ENCODE measurements at regions of chr1 and their contacts with region 1.

Region 1: GRCh38 chr1:39105061-39105840 is 79.1 kb downstream of the NDUFS5 start:
- DNase-seq: peak; percentile 74
- H3K4me3 Mint-ChIP-seq: no peak overlapping the region
- H3K27ac Mint-ChIP-seq: no peak overlapping the region
- H3K4me1 Mint-ChIP-seq: peaks cover 34% of the 10 kb centered on the region
- H3K27me3 Mint-ChIP-seq: no peaks in the 10 kb centered on the region
- CTCF ChIP-seq: no peak

Region 2: DNA sequence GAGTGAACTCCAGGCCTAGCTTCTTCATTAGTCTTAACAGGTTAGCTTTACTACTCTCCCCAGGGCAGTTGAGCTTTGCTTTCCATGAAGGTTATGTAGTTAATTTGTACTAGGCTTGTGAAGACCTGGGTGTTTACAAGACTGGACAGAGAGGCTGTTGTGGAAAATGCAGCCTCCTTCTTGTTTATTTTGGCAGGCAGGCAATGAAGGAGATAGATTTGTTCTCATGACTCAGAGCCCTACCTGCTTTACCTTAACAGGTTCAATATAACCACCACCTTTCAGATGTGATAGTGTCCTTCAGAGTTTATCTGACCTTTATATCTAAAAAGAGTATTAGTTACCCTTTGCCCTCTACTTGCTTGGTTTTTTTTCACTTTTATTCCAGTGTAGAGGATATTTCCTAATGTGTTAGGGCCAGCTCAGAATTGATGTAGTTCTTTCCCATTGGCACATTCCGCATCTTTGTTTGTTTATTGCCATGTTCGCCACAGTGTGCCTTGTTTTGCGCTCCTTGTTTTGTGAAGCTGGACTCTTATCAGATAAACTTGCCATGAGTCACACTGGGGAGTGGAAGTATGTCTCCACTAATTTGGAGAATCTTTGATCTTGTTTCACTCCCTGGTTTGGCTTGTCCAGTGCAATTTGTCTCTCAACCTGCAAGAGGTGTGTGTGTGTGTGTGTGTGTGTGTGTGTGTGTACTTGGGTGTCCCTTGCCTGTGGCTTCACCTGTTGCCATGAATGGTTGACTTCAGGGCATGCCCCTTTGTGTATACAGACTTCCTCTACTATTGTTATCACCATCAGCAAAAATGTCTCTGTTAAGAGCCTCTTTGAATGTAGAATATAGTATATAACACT is 11.8 kb after region 1 on chr1:
- CTCF ChIA-PET with region 1: interaction called, 5 read pairs
- POLR2A ChIA-PET with region 1: interaction called, 427 read pairs
- intact Hi-C with region 1: no loop called
- DNase-seq: peak; percentile 65
- H3K4me3 Mint-ChIP-seq: no peak overlapping the region
- H3K27ac Mint-ChIP-seq: peak overlapping the region; percentile 5
- H3K4me1 Mint-ChIP-seq: peaks cover 8% of the 10 kb centered on the region
- H3K27me3 Mint-ChIP-seq: no peaks in the 10 kb centered on the region
- CTCF ChIP-seq: no peak

Region 3: GRCh38 chr1:39142401-39143151 is 37.3 kb after region 1 on chr1:
- CTCF ChIA-PET with region 1: interaction called, 7 read pairs
- POLR2A ChIA-PET with region 1: interaction called, 65 read pairs
- intact Hi-C with region 1: no loop called
- DNase-seq: peak; percentile 87
- H3K4me3 Mint-ChIP-seq: no peak overlapping the region
- H3K27ac Mint-ChIP-seq: peak overlapping the region; percentile 49
- H3K4me1 Mint-ChIP-seq: peaks cover 36% of the 10 kb centered on the region
- H3K27me3 Mint-ChIP-seq: no peaks in the 10 kb centered on the region
- CTCF ChIP-seq: no peak

Region 4: DNA sequence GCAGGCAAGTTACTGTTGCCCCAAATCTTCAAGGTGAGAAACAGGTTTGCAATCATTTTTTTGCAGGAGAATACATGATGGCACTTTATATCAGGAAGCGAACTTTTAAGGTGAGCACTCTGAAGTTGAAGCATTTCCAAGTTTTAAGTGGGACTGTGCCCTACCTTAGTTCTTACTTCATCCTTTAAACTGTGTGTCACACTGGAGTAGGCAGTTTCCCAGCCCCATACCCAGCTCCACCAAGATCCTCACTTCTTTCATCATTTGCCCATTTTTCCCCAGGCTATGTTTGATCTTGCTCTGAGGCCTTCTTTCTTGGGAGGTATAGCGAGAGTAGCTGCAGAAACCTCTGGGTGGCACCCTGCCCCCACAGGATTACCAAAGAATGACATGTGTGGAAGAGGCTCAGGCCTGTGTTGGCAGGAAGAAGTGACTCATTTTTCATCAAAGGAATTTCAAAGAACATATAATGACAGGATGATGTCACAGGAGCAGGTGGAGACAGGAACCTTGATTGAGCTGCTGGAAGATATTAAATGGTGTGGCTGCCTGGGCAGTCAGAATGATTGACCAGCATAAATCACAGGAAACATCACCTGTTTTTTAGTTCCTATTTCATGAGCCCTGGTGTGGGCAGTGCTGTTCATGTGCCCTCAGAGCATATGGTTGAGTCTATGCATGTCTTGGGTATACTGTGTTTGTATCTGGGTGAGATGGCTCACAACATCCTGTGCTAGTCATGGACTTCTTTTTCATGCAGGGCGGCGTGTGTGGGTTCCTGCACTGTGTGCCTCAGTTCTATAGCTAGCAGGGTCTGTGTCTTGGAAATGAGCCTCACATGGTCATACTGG is 78.5 kb after region 1 on chr1:
- CTCF ChIA-PET with region 1: interaction called, 36 read pairs
- POLR2A ChIA-PET with region 1: interaction called, 327 read pairs
- intact Hi-C with region 1: loop called (anchors 2 kb)
- DNase-seq: peak; percentile 98
- H3K4me3 Mint-ChIP-seq: peak overlapping the region; percentile 53
- H3K27ac Mint-ChIP-seq: peak overlapping the region; percentile 88
- H3K4me1 Mint-ChIP-seq: peaks cover 52% of the 10 kb centered on the region
- H3K27me3 Mint-ChIP-seq: no peaks in the 10 kb centered on the region
- CTCF ChIP-seq: peak; percentile 29

Region 5: DNA sequence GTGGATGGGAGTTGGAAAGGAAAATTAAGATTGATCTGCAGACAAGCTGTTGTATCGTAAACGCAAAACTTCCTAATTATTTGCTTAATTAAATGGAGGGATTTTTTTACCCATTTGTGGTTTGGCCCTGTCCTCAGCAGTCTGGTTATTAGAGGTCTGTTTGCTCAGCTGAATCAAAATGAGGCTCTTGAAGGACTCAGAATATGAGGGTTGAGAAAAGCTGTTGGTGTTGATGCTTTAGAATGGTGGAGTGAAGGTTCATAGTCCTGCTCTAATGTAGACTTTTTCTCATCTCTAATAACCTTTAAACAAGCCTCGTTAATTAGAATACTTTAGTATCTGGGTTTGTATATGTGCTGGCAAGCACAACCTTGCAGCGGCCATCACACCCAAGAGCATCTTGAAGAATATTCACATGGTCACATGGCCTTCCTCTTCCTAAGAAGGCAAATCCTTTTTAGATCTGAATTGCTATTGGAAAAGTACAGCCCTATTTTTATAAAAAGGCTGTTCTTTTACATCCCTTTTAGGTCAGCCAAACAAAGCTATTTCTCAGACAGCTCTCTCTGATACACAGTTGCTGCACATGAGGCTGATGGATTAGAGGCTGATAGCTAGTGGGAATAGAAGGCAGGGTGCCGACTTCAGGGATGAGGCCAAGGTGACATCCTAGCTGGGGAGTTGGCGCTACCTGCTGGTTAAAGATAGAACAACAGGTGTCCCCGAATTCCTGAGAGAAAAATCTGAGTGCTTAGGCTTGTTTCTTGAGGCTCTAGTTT is 153.1 kb after region 1 on chr1:
- CTCF ChIA-PET with region 1: interaction called, 107 read pairs
- POLR2A ChIA-PET with region 1: interaction called, 18 read pairs
- intact Hi-C with region 1: loop called (anchors 1 kb)
- DNase-seq: peak; percentile 75
- H3K4me3 Mint-ChIP-seq: no peak overlapping the region
- H3K27ac Mint-ChIP-seq: peak overlapping the region; percentile 41
- H3K4me1 Mint-ChIP-seq: peaks cover 10% of the 10 kb centered on the region
- H3K27me3 Mint-ChIP-seq: no peaks in the 10 kb centered on the region
- CTCF ChIP-seq: peak; percentile 86

Region 6: GRCh38 chr1:39297551-39297950 is 192.3 kb after region 1 on chr1:
- CTCF ChIA-PET with region 1: no interaction called
- POLR2A ChIA-PET with region 1: no interaction called
- intact Hi-C with region 1: no loop called
- DNase-seq: no peak
- H3K4me3 Mint-ChIP-seq: no peak overlapping the region
- H3K27ac Mint-ChIP-seq: no peak overlapping the region
- H3K4me1 Mint-ChIP-seq: no peaks in the 10 kb centered on the region
- H3K27me3 Mint-ChIP-seq: no peaks in the 10 kb centered on the region
- CTCF ChIP-seq: no peak